IMR-90 (cell line): ENCODE measurements at regions of chr9 and their contacts with region 1.

Region 1: GRCh38 chr9:94952565-94953373 is 226.3 kb downstream of the AOPEP start:
- DNase-seq: no peak
- ATAC-seq: 0 out of 2 replicates have a peak, but pooled peaks have one; percentile 22
- H3K4me3 ChIP-seq: no peak overlapping the region
- H3K27ac ChIP-seq: no peak overlapping the region
- H3K4me1 ChIP-seq: peaks cover 18% of the 10 kb centered on the region
- H3K27me3 ChIP-seq: no peaks in the 10 kb centered on the region
- CTCF ChIP-seq: no peak
- POLR2A ChIP-seq: no peak
- RAD21 ChIP-seq: no peak

Region 2: DNA sequence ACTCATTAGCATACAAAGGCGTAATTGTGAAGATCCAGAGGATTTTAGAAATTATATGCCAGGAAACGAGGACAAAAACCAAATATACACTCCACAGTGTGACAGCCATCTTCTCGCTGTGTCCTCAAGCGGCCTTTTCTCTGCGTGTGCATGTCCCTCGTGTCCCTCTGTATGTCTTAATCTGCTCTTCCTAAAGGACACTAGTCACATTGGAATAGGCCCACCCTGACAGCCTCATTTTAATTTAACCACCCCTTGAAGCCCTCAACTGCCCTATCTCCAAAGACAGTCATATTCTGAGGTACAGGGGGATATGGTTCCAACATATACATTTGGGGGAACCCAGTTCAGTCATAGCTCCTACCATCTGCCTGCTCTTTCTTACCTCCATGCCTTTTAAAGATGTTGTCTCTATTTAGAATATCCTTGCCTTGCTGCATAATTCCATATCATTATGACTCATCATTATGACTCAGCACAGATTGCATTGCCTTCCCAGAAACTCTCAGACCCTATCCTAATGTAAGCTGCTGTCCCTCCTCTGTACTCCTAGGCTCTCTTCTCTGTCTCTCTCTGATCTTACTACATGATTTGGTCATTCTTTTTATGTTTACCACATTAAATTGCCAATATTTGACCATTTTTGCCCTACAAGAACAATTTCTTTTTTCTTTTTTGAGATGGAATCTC is 15.4 kb before region 1 on chr9:
- CTCF ChIA-PET with region 1: no interaction called
- POLR2A ChIA-PET with region 1: no interaction called
- dilution Hi-C with region 1: no loop called
- in situ Hi-C with region 1: no loop called
- intact Hi-C with region 1: no loop called
- DNase-seq: peak; percentile 98
- ATAC-seq: peak; percentile 86
- H3K4me3 ChIP-seq: no peak overlapping the region
- H3K27ac ChIP-seq: peak overlapping the region; percentile 89
- H3K4me1 ChIP-seq: peaks cover 33% of the 10 kb centered on the region
- H3K27me3 ChIP-seq: no peaks in the 10 kb centered on the region
- CTCF ChIP-seq: no peak
- POLR2A ChIP-seq: no peak
- RAD21 ChIP-seq: peak; percentile 27

Region 3: GRCh38 chr9:94993064-94993833 is 40.5 kb after region 1 on chr9:
- CTCF ChIA-PET with region 1: no interaction called
- POLR2A ChIA-PET with region 1: no interaction called
- dilution Hi-C with region 1: no loop called
- in situ Hi-C with region 1: no loop called
- intact Hi-C with region 1: loop called (anchors 5 kb)
- DNase-seq: no peak
- ATAC-seq: no peak
- H3K4me3 ChIP-seq: no peak overlapping the region
- H3K27ac ChIP-seq: no peak overlapping the region
- H3K4me1 ChIP-seq: peaks cover 14% of the 10 kb centered on the region
- H3K27me3 ChIP-seq: no peaks in the 10 kb centered on the region
- CTCF ChIP-seq: no peak
- POLR2A ChIP-seq: no peak
- RAD21 ChIP-seq: no peak

Region 4: DNA sequence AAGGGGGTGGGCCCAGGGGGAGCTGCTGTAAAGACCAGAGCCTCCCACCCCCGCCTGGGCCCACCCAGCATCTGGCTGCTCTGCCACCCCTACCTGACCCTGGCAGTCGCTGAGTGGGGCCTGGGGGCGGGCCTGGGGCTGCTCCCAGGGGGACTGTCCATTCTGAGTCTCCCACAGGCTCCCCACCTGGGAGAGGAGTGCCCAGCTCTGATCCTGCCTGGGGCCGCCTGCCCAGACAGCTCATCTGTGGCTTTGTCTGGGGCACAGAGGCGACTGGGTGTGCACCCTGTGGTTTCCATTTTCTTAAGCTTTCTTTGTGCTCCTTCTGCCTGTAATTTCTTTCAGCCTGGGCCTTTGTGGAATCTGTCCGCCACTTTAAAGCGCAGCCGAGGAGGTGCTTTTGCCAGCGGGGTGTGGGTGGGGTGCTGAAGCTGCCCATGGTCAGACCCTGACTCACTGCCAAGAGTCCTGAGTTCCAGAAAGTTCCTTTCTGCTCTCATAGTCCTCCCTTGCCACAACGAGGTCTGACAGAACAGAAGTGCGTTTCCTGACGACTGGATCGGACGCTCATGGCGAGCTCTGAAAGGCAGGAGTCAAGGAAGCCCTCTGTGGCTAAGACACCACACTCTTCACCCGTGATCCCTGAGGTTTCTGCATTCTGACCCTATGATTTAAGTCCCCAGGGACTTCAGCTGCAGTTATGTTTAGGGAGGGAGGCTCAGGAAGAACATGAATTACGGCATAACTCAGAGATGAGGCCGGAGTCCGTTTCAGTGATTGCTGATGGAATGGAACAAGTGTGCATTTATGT is 139.7 kb after region 1 on chr9:
- CTCF ChIA-PET with region 1: no interaction called
- POLR2A ChIA-PET with region 1: no interaction called
- dilution Hi-C with region 1: no loop called
- in situ Hi-C with region 1: no loop called
- intact Hi-C with region 1: no loop called
- DNase-seq: peak; percentile 68
- ATAC-seq: peak; percentile 48
- H3K4me3 ChIP-seq: no peak overlapping the region
- H3K27ac ChIP-seq: no peak overlapping the region
- H3K4me1 ChIP-seq: peaks cover 25% of the 10 kb centered on the region
- H3K27me3 ChIP-seq: no peaks in the 10 kb centered on the region
- CTCF ChIP-seq: no peak
- POLR2A ChIP-seq: no peak
- RAD21 ChIP-seq: no peak; the same call in 1 of the 2 replicates